ENCODE measurements at regions of chr14 and their contacts with region 1.

Region 1: DNA sequence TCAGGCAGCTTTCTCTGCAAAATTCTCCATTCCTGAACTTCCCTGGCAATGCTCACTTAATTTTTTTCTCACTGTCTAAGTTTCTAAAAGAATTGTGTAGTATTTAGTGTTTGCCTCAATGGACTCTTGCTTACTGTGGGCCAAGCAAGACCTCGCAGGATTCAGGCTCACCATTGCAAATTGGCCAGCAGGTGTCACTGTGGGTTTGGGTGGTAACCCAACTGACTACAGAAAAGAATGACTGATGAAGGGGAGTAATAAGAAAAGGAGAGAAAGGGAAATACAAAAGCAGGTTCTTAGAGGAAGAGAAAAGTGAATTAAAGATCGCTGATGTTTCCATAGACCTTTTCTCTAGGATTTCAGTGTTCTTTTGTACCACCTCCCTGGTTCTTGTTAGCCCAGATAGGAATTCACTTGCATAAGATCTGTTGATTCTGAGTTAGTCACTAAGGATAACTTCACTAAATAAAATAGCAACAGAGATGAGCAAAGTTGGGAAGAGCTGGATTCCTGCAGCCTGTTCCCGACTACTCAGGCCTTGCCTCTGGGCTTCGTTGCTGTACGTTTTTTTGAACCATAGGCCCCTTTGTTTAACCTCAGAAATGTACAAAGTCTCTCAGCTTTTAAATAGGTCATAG is 386.5 kb upstream of the DDHD1 start:
- DNase-seq: peak; percentile 77 to 93
- H3K4me3 ChIP-seq: no peak overlapping the region
- H3K27ac ChIP-seq: peak overlapping the region in 4 of 5 donors; percentile 16 to 68 (median 58)
- H3K4me1 ChIP-seq: peaks cover 0 to 46% (median 23%) of the 10 kb centered on the region in 4 donors
- H3K27me3 ChIP-seq: no peaks in the 10 kb centered on the region
- CTCF ChIP-seq: peak in 5 of 7 experiments; percentile 69 to 83 (median 79)
- EP300 ChIP-seq: no peak
- POLR2A ChIP-seq: no peak

Region 2: DNA sequence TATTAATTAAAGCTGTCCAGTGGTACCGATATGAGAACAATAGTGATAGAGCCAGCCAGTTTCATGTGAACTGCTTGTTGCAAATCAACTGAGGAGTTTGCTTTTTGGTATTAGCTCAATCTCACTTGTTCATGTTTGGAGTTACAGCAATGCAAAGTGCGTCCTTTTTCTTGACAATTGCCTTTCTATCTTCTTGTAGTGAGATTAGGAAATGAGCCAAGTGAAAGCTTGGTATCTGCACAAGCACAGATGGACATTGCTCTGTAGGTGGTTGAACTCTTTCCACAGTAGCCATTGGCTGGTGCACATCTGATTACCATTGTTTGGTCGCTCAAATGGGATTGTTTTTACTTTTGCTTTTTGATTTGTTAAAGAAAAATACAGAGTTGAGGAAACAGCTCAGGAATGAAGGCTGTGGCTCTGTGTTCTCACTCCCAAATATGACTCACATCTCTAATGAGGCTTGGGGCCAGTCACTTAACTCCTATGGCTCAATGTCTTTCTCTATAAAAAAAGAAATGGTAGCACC is 175.6 kb after region 1 on chr14:
- intact Hi-C with region 1: no loop called
- DNase-seq: peak in 1 of 2 donors; percentile 26
- H3K4me3 ChIP-seq: no peak overlapping the region
- H3K27ac ChIP-seq: peak overlapping the region in 3 of 5 donors; percentile 25 to 29 (median 26)
- H3K4me1 ChIP-seq: peaks cover 0 to 18% (median 12%) of the 10 kb centered on the region in 4 donors
- H3K27me3 ChIP-seq: no peaks in the 10 kb centered on the region
- CTCF ChIP-seq: no peak
- EP300 ChIP-seq: no peak
- POLR2A ChIP-seq: no peak

Region 3: DNA sequence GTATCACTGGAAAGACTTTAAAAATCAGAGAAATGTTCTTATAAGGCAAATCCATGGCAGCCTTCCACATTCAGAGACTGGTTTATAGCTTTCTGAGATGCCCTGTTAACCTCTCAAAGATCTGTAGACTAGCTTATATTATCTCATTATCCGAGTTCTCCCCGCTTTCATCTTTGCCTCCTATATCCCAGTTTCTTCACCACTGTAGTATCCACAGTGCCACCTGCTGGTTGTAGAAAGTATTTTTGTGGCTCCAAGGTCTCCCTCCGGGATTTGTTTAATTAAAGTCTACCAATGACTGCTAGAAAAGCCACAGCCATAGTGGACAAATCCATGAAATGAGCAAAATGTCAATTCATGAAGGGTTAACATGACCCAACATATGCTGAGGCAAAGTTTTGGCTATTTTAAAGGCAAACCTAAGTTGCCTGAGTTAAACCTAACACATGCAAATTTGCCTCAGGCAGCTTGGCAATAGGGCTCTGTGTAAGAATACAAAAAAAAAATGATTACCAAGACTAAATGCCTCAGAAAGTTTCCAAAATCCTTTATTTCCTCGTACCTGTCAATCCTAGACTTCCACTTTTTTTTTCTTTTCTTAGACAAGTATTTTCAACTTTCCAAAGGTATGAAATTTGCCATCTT is 635.8 kb after region 1 on chr14:
- intact Hi-C with region 1: loop called (anchors 5 kb)
- DNase-seq: peak; percentile 74 to 89
- H3K4me3 ChIP-seq: no peak overlapping the region
- H3K27ac ChIP-seq: peak overlapping the region in 1 of 5 donors; percentile 35
- H3K4me1 ChIP-seq: peaks cover 0 to 44% (median 26%) of the 10 kb centered on the region in 4 donors
- H3K27me3 ChIP-seq: no peaks in the 10 kb centered on the region
- CTCF ChIP-seq: peak in 6 of 7 experiments; percentile 34 to 91 (median 84)
- EP300 ChIP-seq: no peak
- POLR2A ChIP-seq: no peak

Region 4: DNA sequence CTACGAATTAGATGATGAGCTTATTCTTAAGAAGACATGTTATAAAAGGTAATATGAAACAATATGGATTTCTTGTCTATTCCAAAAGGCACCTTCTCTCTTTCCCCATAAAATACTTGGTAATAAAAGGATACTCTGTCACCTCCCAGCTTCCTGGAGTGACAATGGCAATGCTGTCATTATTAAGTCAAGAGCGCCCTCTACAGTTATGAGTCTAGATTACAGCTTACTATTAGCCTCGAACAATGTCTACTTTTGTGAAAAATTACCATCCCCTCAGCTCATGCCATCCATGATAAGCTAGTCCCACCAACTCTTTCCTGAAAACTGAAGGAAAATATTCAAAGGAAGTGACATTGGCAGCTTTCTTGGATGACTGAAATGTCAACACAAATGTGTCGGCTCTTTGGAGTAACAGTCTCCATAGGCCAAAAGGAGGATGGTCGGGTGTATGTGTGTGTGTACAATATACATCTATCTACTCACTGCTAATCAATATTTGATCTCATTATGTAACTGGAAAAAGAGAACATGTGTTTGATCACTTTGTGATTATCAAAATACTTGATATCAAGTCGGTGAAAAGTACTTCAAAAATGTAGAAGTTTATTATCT is 808.5 kb after region 1 on chr14:
- intact Hi-C with region 1: loop called (anchors 10 kb)
- DNase-seq: peak in 1 of 2 donors; percentile 80
- H3K4me3 ChIP-seq: no peak overlapping the region
- H3K27ac ChIP-seq: peak overlapping the region in 2 of 5 donors; percentile 67 to 78
- H3K4me1 ChIP-seq: peaks cover 0 to 21% (median 11%) of the 10 kb centered on the region in 4 donors
- H3K27me3 ChIP-seq: no peaks in the 10 kb centered on the region
- CTCF ChIP-seq: peak in 5 of 7 experiments; percentile 52 to 81 (median 67)
- EP300 ChIP-seq: no peak
- POLR2A ChIP-seq: no peak